ENCODE measurements at regions of chr3 and their contacts with region 1.

Region 1: GRCh38 chr3:49530231-49530630 is 24.0 kb upstream of the BSN start:
- DNase-seq: no peak
- ATAC-seq: no peak
- H3K4me3 ChIP-seq: no peak overlapping the region
- H3K27ac ChIP-seq: no peak overlapping the region
- H3K4me1 ChIP-seq: no peaks in the 10 kb centered on the region
- CTCF ChIP-seq: no peak
- EP300 ChIP-seq: no peak
- POLR2A ChIP-seq: no peak
- RAD21 ChIP-seq: no peak

Region 2: GRCh38 chr3:49476563-49476962 is 53.7 kb before region 1 on chr3:
- CTCF ChIA-PET with region 1: no interaction called
- POLR2A ChIA-PET with region 1: interaction called, 11 read pairs
- DNase-seq: no peak
- ATAC-seq: no peak
- H3K4me3 ChIP-seq: no peak overlapping the region
- H3K27ac ChIP-seq: no peak overlapping the region
- H3K4me1 ChIP-seq: peaks cover 7% of the 10 kb centered on the region
- CTCF ChIP-seq: no peak
- EP300 ChIP-seq: no peak
- POLR2A ChIP-seq: no peak
- RAD21 ChIP-seq: no peak

Region 3: DNA sequence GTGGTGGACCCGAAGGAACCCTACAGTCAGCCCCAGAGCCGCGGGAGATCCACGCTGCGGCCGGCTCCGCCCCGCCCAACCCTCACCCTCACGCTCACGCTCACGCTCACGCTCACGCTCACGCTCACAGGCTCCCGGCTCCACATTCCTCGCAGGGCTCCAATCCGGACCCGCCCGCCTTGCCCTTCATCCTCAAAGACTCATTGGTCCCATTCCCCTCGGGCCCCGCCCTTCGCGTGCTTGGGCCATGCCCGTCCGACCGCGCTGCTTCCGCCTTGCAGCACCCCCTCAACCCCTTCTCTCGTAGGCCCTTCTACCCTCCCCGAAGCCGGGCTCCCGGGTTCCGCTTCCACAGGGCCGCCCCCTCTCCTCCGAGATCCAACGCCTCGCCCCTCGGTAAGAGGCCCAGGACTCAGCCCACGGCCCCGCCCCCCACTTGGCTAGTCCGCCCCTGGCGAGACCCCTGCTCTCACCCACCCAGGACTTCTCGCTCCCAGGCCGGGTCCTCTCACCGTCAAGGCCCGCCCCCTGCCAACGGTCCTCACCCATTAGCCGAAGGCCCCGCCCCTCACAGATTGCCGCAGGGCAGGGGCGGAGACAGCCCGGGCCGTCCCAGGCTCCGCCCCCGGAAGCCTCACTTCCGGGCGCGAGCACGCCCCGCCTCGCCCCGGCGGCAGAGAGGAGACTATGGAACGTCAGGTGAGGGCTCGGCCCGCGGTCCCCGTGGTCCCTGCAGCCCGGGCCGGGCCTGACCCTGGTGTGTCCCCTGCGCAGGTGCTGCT is 143.7 kb after region 1 on chr3 and contains the start of gene APEH:
- CTCF ChIA-PET with region 1: interaction called, 210 read pairs
- POLR2A ChIA-PET with region 1: no interaction called
- DNase-seq: peak; percentile 90 to 98
- ATAC-seq: peak; percentile 88 to 92
- H3K4me3 ChIP-seq: peak within 1 kb of the TSS; percentile 99
- H3K27ac ChIP-seq: peak within 1 kb of the TSS; percentile 91 to 97
- H3K4me1 ChIP-seq: peaks cover 19% of the 10 kb centered on the region
- CTCF ChIP-seq: no peak
- EP300 ChIP-seq: no peak
- POLR2A ChIP-seq: peak; percentile 51
- RAD21 ChIP-seq: no peak
- polyA plus RNA-seq, gene APEH: 60.8 and 74.9 TPM in 2 replicates